WTC11 (cell line): ENCODE measurements at regions of chr7 and their contacts with region 1.

Region 1: GRCh38 chr7:2660585-2661408 is 27.2 kb upstream of the AMZ1 start:
- DNase-seq: no peak
- ATAC-seq: no peak
- H3K4me3 Mint-ChIP-seq: no peak overlapping the region
- H3K27ac Mint-ChIP-seq: peak overlapping the region; percentile 83
- H3K4me1 Mint-ChIP-seq: peaks cover 6% of the 10 kb centered on the region; the same call in 1 of the 2 replicates
- H3K27me3 Mint-ChIP-seq: no peaks in the 10 kb centered on the region
- CTCF ChIP-seq: peak; percentile 58

Region 2: GRCh38 chr7:2680792-2681490 is 20.1 kb after region 1 on chr7:
- CTCF ChIA-PET with region 1: interaction called, 98 read pairs
- POLR2A ChIA-PET with region 1: no interaction called
- DNase-seq: peak; percentile 89
- ATAC-seq: peak; percentile 90
- H3K4me3 Mint-ChIP-seq: no peak overlapping the region
- H3K27ac Mint-ChIP-seq: no peak overlapping the region
- H3K4me1 Mint-ChIP-seq: no peaks in the 10 kb centered on the region
- H3K27me3 Mint-ChIP-seq: peaks cover 2% of the 10 kb centered on the region
- CTCF ChIP-seq: peak; percentile 69

Region 3: GRCh38 chr7:2729701-2730417 is 69.1 kb after region 1 on chr7:
- CTCF ChIA-PET with region 1: no interaction called
- POLR2A ChIA-PET with region 1: no interaction called
- DNase-seq: peak; percentile 9
- ATAC-seq: no peak
- H3K4me3 Mint-ChIP-seq: no peak overlapping the region
- H3K27ac Mint-ChIP-seq: peak overlapping the region; percentile 76
- H3K4me1 Mint-ChIP-seq: peaks cover 21% of the 10 kb centered on the region
- H3K27me3 Mint-ChIP-seq: no peaks in the 10 kb centered on the region
- CTCF ChIP-seq: no peak